ENCODE measurements at regions of chr10 and their contacts with region 1.

Region 1: DNA sequence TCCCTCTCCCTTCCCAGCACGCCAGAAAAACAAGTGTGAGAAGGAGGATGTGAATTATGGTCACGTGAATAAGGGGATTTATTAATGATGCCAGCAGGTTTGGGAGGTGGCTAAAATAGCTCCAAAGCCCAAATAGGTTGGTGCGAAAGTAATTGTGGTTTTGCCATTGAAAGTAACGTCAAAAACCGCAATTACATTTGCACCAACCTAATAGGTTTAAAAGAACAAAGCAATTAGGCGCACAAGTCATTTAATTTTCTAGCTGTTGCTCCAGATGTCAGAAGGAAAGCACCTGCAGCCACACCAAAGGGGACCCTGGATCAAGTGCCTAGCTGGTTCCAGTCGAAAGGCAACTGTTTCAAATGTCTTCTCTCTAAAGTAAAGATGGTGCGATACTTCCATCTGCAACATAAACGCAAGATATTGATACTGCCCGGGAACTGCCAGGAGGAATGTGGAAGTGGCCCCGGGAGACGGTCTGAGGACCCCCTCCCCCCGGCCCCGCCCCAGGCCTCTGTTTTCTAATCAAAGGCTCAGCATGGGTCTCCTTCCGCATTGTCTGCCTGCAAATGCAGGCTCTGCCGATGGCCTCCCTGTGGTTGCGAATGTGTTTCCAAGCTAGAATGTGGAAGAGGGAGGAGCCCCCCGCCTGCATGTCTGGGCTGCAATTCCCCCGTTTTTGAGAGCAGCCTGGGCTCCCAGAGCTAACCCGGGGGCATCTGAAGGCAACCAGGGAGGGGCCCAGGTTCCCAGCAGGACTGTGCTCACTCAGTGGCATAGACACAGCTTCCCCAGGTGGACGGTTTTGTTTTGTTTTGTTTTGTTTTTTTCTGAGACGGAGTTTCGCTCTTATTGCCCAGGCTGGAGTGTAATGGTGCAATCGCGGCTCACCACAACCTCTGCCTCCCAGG is 224.0 kb upstream of the PPP2R2D start:
- DNase-seq: no peak
- ATAC-seq: no peak
- H3K4me3 ChIP-seq: no peak overlapping the region
- H3K27ac ChIP-seq: no peak overlapping the region
- H3K4me1 ChIP-seq: no peaks in the 10 kb centered on the region
- H3K27me3 ChIP-seq: peaks cover 0 to 40% (median 15%) of the 10 kb centered on the region in 7 donors
- CTCF ChIP-seq: no peak

Region 2: DNA sequence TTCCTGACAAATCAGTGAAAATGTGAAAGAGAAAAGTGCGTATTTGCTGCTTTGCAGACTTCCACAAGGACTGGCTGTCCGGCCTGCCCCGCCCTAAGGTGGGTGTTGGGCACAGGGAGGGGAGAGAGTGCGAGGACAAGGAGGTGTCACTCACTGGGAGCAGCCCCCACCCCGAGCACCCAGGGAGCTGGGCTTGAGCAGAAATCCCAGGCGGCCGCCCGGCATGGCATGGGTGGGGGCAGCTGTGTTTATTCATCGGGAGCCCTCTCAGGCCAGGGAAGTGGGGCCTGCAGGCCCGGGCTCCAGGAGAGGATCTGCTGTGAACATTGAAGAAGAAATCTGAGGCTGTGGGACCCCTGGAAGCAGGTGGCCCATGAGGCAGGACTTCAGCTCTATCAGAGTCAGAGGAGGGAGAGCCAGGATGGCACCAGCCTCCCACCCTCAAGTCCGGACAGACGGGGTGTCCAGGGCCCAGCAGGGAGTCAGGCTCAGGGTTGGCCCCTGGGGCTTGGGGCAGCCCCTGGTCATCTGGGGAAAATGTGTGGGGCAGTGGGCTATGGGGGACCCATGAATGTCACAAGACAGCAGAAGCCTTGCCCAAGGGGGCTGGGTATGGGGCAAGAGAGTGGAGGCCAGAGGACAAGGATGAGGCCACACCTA is 59.7 kb after region 1 on chr10:
- intact Hi-C with region 1: loop called in 1 of 10 experiments (anchors 10 kb)
- DNase-seq: no peak
- ATAC-seq: no peak
- H3K4me3 ChIP-seq: no peak overlapping the region
- H3K27ac ChIP-seq: no peak overlapping the region
- H3K4me1 ChIP-seq: no peaks in the 10 kb centered on the region
- H3K27me3 ChIP-seq: peaks cover 0 to 23% (median 6%) of the 10 kb centered on the region in 7 donors
- CTCF ChIP-seq: no peak